ENCODE measurements at regions of chr9 and their contacts with region 1.

Region 1: DNA sequence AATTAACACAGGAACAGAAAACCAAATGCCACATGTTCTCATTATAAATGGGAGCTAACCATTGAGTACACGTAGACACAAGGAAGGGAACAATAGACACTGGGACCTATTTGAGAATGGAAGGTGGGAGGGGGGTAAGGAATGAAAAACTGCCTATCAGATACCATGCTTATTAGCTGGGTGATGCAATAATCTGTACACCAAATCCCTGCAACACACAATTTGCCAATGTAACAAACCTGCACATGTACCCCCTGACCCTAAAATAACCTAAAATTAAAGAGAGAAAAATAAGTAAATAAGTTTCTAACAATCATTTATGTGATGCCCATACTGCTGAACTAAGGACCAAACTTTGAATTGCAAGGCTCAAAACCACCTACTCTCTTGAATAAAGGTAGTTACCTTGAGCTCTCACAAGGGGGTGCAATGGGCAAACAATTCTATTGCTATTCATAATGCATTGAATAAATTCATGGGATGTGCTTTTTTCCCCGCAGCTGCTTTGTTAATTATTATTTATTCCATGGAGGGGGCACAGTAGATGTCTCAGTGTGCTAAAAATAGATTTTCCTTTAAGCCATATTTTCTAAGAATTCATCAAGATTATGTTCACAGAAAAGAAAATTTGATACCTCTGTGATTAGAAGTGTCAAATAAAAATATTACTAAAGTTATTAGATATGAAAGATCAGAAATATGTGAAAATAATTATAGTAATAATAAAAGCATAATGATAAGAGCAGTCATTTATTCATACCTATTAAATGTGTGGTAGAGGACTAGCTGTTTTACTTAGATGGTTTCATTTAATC is 76.2 kb upstream of the PTPN3 start:
- DNase-seq: peak; percentile 76
- H3K4me3 Mint-ChIP-seq: no peak overlapping the region
- H3K27ac Mint-ChIP-seq: no peak overlapping the region
- H3K4me1 Mint-ChIP-seq: peaks cover 5% of the 10 kb centered on the region
- H3K27me3 Mint-ChIP-seq: no peaks in the 10 kb centered on the region
- CTCF ChIP-seq: peak; percentile 71

Region 2: DNA sequence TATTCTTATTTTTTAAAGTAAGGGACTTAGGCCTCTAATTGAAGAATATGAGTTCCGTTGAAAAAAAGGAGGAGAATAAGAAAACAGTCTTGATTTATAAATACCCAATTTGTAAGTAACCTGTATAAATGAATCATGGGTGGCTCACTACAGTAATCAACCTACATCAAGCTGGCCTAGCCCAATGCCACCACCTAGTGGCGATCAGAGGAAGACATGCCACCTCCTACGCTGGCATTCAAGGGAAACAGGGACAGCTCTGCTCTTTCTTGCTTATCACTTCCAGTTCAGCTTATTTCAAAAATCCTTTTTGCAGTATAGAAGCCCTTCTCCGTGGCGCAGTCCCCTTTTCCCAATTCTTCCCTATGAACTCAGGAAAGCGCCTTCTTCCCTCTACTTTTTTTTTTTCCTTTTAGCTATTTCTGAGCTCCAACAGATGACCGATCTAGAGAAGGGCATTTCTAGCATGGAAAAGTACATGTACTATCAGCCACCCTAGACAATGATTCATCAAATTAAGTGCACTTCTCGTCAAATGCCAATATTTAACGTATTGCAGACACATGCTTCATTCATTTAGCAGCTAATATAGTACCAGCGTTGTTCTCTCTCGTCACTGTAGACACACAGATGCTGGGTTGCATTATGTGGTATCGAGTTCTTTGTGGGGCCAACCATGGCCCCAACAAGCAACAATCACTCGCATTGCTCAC is 104.5 kb before region 1 on chr9:
- CTCF ChIA-PET with region 1: interaction called, 10 read pairs
- POLR2A ChIA-PET with region 1: no interaction called
- intact Hi-C with region 1: no loop called
- DNase-seq: peak; percentile 88
- H3K4me3 Mint-ChIP-seq: no peak overlapping the region
- H3K27ac Mint-ChIP-seq: peak overlapping the region; percentile 67
- H3K4me1 Mint-ChIP-seq: peaks cover 49% of the 10 kb centered on the region
- H3K27me3 Mint-ChIP-seq: no peaks in the 10 kb centered on the region
- CTCF ChIP-seq: peak; percentile 91

Region 3: GRCh38 chr9:109652964-109653363 is 78.7 kb after region 1 on chr9:
- CTCF ChIA-PET with region 1: interaction called, 11 read pairs
- POLR2A ChIA-PET with region 1: no interaction called
- intact Hi-C with region 1: loop called (anchors 1 kb)
- DNase-seq: peak; percentile 63
- H3K4me3 Mint-ChIP-seq: no peak overlapping the region
- H3K27ac Mint-ChIP-seq: no peak overlapping the region
- H3K4me1 Mint-ChIP-seq: peaks cover 6% of the 10 kb centered on the region
- H3K27me3 Mint-ChIP-seq: no peaks in the 10 kb centered on the region
- CTCF ChIP-seq: peak; percentile 36

Region 4: GRCh38 chr9:109817846-109818472 is 243.7 kb after region 1 on chr9:
- CTCF ChIA-PET with region 1: interaction called, 147 read pairs
- POLR2A ChIA-PET with region 1: interaction called, 16 read pairs
- intact Hi-C with region 1: loop called (anchors 1 kb)
- DNase-seq: peak; percentile 91
- H3K4me3 Mint-ChIP-seq: no peak overlapping the region
- H3K27ac Mint-ChIP-seq: no peak overlapping the region
- H3K4me1 Mint-ChIP-seq: no peaks in the 10 kb centered on the region
- H3K27me3 Mint-ChIP-seq: no peaks in the 10 kb centered on the region
- CTCF ChIP-seq: peak; percentile 84

Region 5: DNA sequence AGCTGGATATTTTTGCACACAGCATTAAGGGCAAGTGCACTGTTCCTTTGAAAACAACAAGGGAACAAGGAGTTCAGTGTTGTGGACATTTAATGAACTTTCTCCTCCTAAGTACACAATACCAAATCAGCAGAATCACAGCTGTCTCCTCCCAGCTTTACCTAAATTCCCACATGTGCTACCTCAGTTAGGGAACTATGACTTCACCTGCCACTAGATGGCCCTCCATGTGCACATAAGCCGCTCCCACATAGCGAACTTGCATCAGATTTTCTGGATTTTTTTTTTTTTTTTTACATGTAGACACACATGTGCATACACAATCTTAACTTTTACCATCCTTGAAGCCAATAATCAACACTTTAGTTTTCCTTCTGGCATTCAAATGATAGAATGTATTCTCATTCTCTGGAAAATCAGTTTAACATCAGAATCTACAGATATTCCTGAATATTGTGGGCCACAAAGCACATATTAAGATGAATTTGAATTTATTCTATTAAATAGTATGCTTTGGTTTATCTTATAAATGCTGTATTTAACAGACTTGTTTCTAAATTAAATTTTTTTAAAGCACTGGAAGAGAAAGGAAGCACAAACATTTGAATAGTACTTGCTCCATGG is 329.4 kb after region 1 on chr9:
- CTCF ChIA-PET with region 1: interaction called, 18 read pairs
- POLR2A ChIA-PET with region 1: no interaction called
- intact Hi-C with region 1: loop called (anchors 5 kb)
- DNase-seq: peak; percentile 82
- H3K4me3 Mint-ChIP-seq: no peak overlapping the region
- H3K27ac Mint-ChIP-seq: no peak overlapping the region
- H3K4me1 Mint-ChIP-seq: peaks cover 6% of the 10 kb centered on the region
- H3K27me3 Mint-ChIP-seq: no peaks in the 10 kb centered on the region
- CTCF ChIP-seq: peak; percentile 69

Region 6: GRCh38 chr9:110069326-110070248 is 495.3 kb after region 1 on chr9:
- CTCF ChIA-PET with region 1: no interaction called
- POLR2A ChIA-PET with region 1: no interaction called
- intact Hi-C with region 1: no loop called
- DNase-seq: peak; percentile 37
- H3K4me3 Mint-ChIP-seq: no peak overlapping the region
- H3K27ac Mint-ChIP-seq: no peak overlapping the region
- H3K4me1 Mint-ChIP-seq: peaks cover 20% of the 10 kb centered on the region
- H3K27me3 Mint-ChIP-seq: no peaks in the 10 kb centered on the region
- CTCF ChIP-seq: no peak

Region 7: GRCh38 chr9:110152704-110153374 is 578.6 kb after region 1 on chr9:
- CTCF ChIA-PET with region 1: interaction called, 11 read pairs
- POLR2A ChIA-PET with region 1: no interaction called
- intact Hi-C with region 1: loop called (anchors 5 kb)
- DNase-seq: peak; percentile 66
- H3K4me3 Mint-ChIP-seq: no peak overlapping the region
- H3K27ac Mint-ChIP-seq: no peak overlapping the region
- H3K4me1 Mint-ChIP-seq: no peaks in the 10 kb centered on the region
- H3K27me3 Mint-ChIP-seq: no peaks in the 10 kb centered on the region
- CTCF ChIP-seq: peak; percentile 75